Dendritic cell treated with granulocyte-macrophage colony-stimulating factor and Interleukin-4, amounts not matched to agents 40 ng/mL and 50 ng/mL, for 4 days (primary cell): ENCODE measurements at regions of chr18 and their contacts with region 1.

Region 1: GRCh38 chr18:62714671-62715435 is 488 bp upstream of the PHLPP1 start:
- H3K4me3 Mint-ChIP-seq: peak overlapping the region; percentile 75
- H3K27ac Mint-ChIP-seq: peak overlapping the region; percentile 81
- H3K4me1 Mint-ChIP-seq: peaks cover 27% of the 10 kb centered on the region
- H3K27me3 Mint-ChIP-seq: peaks cover 1% of the 10 kb centered on the region

Region 2: DNA sequence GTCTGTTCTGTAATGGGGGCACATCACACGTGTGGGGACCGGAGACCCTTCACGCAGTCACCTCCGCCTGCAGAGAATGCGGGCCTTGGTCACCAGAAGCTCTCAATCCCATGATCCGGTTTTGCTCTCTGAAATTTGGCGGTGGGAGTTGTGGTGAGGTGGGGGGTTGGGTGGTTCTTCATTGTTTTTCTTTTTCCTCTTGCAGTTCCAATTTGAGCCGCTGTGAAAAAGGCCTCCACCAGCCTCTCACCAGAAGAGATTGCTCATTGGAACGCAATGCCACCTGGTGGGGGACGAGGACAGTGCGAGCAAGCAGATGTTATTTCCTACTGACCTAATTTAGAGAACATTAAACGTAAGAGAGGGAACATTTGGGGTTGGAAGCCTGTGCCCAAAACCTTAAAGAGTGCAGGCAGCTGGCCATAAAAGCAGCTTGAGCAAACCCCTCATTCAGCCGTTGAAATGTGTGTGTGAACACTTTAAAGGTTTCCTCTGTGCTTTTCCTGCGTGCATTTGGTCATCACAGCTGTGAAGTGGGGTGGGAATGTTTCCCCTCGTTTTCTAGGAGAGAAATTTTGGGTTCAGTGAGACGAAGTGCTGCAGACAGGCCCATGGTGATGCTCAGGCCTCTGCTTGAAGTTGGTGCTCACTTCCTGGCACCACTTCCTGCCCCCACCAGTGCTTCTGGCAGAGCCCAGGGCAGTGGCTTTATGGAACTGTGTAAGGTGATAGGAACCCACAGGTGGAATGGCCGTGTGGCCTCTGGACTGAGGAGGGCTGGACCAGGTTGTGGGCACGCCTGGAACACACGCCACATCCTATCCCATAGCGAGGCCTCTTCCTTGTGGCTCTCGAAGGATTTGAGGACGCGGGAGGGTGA is 130.4 kb before region 1 on chr18:
- intact Hi-C with region 1: loop called (anchors 10 kb)
- H3K4me3 Mint-ChIP-seq: peak overlapping the region; percentile 40
- H3K27ac Mint-ChIP-seq: peak overlapping the region; percentile 68
- H3K4me1 Mint-ChIP-seq: peaks cover 44% of the 10 kb centered on the region
- H3K27me3 Mint-ChIP-seq: peaks cover 2% of the 10 kb centered on the region

Region 3: DNA sequence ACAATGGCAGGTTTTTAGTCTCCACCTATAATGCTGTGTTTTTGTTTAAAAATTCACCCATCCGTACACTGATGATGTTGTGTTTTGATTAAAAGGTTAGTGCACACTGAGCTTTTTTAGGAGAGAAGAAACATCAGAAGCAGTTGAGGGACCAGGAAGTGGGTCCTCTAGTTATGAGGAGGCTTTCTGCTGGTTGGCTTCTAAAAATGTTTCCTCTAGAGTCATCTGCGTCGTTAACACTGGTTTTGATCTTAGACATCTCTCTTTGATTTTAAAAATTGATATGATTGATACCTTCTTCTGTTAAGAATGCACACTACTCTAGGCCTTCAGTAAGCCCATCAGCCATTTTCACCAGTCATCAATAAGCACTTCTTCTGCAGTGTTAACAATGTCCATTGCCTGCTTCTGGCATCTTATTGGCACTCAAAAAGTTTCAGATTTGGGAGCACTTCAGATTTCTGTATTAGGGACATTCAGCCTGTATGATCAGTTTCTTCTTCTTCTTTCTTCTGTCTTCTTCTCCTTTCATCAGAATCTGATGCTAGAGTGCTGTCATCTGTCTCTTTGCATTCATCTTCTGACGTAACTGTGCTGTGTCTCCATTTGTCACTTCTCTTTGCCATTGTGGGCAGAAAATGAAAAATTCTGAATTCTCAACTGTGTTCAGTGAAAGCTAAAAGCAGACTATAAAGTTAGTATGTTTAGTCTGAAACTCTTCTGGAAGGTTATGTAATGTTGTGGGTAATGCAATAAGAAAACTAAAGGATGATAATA is 56.8 kb after region 1 on chr18:
- intact Hi-C with region 1: no loop called
- H3K4me3 Mint-ChIP-seq: no peak overlapping the region
- H3K27ac Mint-ChIP-seq: no peak overlapping the region
- H3K4me1 Mint-ChIP-seq: peaks cover 12% of the 10 kb centered on the region
- H3K27me3 Mint-ChIP-seq: no peaks in the 10 kb centered on the region

Region 4: DNA sequence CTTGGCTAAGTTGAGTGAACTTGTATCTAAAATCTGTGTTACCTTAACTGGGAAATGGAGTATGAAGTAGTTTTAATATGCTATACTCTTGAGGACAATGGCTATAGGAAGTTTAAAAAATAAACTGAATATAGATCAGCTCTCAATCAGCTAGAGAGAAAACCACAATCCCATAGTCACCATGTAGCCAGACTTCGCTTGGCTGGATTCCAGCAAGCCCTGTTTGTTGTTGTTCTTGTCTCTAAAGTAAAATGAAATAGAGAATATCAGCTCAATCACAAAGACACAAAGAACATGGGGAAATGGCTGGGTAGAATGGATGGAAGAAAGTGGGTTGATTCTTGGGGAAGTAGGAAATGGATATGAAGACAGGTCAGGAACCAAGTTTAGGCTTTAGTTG is 235.4 kb after region 1 on chr18:
- intact Hi-C with region 1: loop called (anchors 2 kb)
- H3K4me3 Mint-ChIP-seq: no peak overlapping the region
- H3K27ac Mint-ChIP-seq: peak overlapping the region; percentile 64
- H3K4me1 Mint-ChIP-seq: peaks cover 20% of the 10 kb centered on the region
- H3K27me3 Mint-ChIP-seq: no peaks in the 10 kb centered on the region

Region 5: DNA sequence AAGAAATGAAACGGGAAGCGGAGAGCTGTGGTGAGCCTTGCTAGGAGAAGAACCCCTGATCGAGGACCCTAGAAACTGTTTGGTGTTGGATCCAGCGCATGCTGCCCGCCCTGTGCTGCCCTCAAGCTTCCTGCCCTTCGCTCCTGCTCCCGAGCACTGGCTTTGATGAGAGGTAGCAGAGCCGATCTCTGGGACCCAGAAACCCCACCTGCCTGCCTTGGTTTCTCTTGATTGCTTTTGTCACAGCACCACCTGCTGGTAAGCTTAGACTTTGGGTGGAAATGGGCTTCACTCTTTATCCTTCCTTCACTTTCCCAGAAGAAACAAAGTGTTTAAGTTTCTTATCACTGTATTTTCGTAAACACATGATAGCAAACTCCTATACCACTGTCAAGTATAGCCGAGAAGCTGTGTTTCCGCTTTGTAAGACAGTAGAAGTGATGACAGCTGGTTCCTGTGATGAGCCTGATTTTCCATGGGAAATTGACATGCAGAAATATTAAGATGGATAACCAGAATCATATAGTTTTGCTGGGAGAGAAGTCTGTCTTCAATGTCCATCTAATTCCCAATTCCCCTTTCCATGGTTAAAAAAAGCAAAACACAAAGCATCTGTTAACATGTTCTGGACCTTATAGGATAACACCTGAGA is 267.9 kb after region 1 on chr18:
- intact Hi-C with region 1: loop called (anchors 1 kb)
- H3K4me3 Mint-ChIP-seq: peak overlapping the region; percentile 78
- H3K27ac Mint-ChIP-seq: peak overlapping the region; percentile 10
- H3K4me1 Mint-ChIP-seq: peaks cover 40% of the 10 kb centered on the region
- H3K27me3 Mint-ChIP-seq: no peaks in the 10 kb centered on the region